ENCODE measurements at regions of chr10 and their contacts with region 1.

Region 1: DNA sequence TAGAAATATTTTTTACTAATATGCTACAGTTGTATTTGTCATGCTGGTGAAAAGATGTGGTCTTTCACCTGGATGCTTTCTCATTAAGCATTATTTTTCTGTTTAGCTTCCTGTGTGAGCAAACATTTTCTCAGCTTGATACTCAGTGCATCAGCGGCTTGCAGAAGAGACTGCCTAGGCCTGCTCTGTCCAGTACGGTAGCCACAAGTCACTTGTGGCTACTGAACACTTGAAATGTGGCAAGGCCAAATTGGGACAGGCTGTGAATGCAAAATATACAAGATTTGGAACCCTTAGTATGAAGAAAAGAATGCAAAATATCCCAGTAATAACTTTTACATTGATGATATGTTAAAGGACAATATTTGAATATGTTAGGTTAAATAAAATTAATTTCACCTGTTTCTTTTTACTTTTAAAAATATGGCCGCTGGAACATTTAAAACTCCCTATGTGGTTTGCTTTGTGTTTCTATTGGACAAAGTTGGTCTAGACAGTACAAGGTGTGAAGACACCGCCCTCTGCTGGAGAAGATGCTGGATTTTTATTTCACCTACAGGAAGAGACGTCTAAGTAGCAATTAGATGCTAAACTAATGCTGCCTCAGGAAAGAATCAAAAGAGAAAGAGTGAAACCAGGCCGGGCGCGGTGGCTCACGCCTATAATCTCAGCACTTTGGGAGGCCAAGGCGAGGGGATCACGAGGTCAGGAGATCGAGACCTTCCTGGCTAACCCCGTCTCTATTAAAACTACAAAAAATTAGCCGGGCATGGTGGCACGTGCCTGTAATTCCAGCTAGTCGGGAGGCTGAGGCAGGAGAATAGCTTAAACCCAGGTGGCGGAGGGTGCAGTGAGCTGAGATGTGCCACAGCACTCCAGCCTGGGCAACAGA is 5.3 kb downstream of the SRGN start:
- DNase-seq: peak; percentile 25
- H3K4me3 ChIP-seq: peak overlapping the region in 1 of 4 donors; percentile 9
- H3K27ac ChIP-seq: peak overlapping the region in 2 of 4 donors; percentile 16 to 53
- H3K4me1 ChIP-seq: peaks cover 0 to 7% (median 0%) of the 10 kb centered on the region in 3 donors
- H3K27me3 ChIP-seq: no peaks in the 10 kb centered on the region
- CTCF ChIP-seq: peak; percentile 53 to 88 (median 81)
- POLR2A ChIP-seq: no peak

Region 2: DNA sequence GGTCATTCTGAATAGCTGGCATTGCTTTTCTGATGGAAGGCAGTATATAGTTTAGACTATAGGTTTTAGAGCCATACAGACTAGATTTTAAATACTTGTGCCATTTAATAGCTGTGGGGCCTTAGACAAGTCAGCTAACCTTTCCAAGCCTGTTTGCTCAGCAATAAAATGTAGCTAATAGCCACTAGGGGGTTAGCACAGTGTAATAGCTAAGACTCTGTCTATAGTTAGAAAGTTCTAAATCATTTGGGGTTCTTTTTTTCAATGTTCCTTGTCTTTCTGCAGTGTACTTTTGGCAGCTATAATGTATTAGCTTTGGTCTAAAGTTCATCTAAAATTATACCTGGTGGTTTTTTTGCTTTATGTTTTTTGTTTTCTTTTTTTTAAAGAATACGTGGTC is 112.1 kb before region 1 on chr10:
- intact Hi-C with region 1: no loop called
- DNase-seq: no peak
- H3K4me3 ChIP-seq: no peak overlapping the region
- H3K27ac ChIP-seq: no peak overlapping the region
- H3K4me1 ChIP-seq: no peaks in the 10 kb centered on the region
- H3K27me3 ChIP-seq: no peaks in the 10 kb centered on the region
- CTCF ChIP-seq: no peak
- POLR2A ChIP-seq: no peak

Region 3: GRCh38 chr10:69004821-69005220 is 88.4 kb before region 1 on chr10:
- intact Hi-C with region 1: loop called (anchors 10 kb)
- DNase-seq: no peak
- H3K4me3 ChIP-seq: no peak overlapping the region
- H3K27ac ChIP-seq: peak overlapping the region in 1 of 4 donors; percentile 17
- H3K4me1 ChIP-seq: peaks cover 0 to 8% (median 0%) of the 10 kb centered on the region in 3 donors
- H3K27me3 ChIP-seq: no peaks in the 10 kb centered on the region
- CTCF ChIP-seq: peak in 4 of 6 experiments; percentile 39 to 60 (median 40)
- POLR2A ChIP-seq: no peak

Measured in esophagus squamous epithelium (tissue), 5 donors.